ENCODE measurements at regions of chr15 and their contacts with region 1.

Region 1: DNA sequence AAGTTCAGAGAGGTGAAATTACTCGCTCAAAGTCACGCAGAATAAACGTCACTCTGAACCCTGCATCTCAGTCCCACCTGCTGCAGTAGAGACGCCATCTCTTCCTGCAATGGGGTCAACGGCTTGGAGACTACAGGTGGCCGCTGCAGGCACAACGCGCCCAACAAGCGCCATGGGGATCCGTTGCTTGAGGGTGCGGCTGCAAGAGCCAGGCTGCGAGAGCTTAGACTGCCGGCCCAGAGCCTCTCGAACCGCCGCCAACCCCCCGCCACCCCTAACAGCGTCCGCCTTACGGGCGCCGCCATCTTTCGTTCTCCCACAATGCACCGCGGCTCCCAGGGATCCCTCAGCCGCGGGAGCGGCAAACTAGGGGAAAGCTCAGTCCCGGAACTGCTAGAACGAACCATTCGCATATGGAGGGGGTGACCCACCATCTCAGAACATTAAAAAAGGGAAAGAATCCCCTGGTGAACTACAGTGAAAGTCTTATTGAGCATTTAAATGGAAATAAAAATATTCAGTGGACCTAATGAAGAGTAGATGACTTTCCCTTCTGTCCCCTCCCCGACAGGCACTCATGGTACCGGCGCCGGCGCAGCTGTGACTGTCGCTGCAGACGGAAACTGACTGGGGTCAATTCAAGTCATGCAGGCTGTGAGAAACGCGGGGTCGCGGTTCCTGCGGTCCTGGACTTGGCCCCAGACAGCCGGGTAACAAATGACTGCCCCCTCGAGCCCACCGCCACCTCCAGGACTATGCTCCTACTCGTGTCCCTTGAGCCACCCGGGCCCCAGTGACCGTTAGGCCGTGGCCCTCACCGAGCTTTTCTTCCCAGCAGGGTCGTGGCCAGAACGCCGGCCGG is at the starts of genes MRPL46 and MRPS11:
- DNase-seq: peak; percentile 92
- H3K4me3 ChIP-seq: peak within 1 kb of the TSS; percentile 76 to 99 (median 84)
- H3K27ac ChIP-seq: peak within 1 kb of the TSS; percentile 96
- H3K4me1 ChIP-seq: peaks cover 37% of the 10 kb centered on the region
- H3K27me3 ChIP-seq: no peaks in the 10 kb centered on the region
- CTCF ChIP-seq: no peak
- POLR2A ChIP-seq: peak; percentile 87
- total RNA-seq, gene MRPL46: 27.9 and 30.9 TPM in 2 replicates
- total RNA-seq, gene MRPS11: 66.3 and 71.7 TPM in 2 replicates

Region 2: GRCh38 chr15:88401996-88402656 is 65.2 kb before region 1 on chr15:
- CTCF ChIA-PET with region 1: no interaction called
- POLR2A ChIA-PET with region 1: no interaction called
- dilution Hi-C with region 1: no loop called
- intact Hi-C with region 1: no loop called
- DNase-seq: no peak
- H3K4me3 ChIP-seq: no peak overlapping the region
- H3K27ac ChIP-seq: no peak overlapping the region
- H3K4me1 ChIP-seq: no peaks in the 10 kb centered on the region
- H3K27me3 ChIP-seq: no peaks in the 10 kb centered on the region
- CTCF ChIP-seq: no peak
- POLR2A ChIP-seq: no peak

Region 3: GRCh38 chr15:88454867-88455810 is 12.2 kb before region 1 on chr15:
- CTCF ChIA-PET with region 1: interaction called, 26 read pairs
- POLR2A ChIA-PET with region 1: no interaction called
- dilution Hi-C with region 1: no loop called
- intact Hi-C with region 1: loop called (anchors 1 kb)
- DNase-seq: peak; percentile 60
- H3K4me3 ChIP-seq: no peak overlapping the region
- H3K27ac ChIP-seq: no peak overlapping the region
- H3K4me1 ChIP-seq: peaks cover 15% of the 10 kb centered on the region
- H3K27me3 ChIP-seq: no peaks in the 10 kb centered on the region
- CTCF ChIP-seq: peak; percentile 77 to 84
- POLR2A ChIP-seq: no peak

Region 4: GRCh38 chr15:88546248-88547129 is 79.2 kb after region 1 on chr15 and contains the start of gene DET1:
- CTCF ChIA-PET with region 1: no interaction called
- POLR2A ChIA-PET with region 1: interaction called, 3 read pairs
- dilution Hi-C with region 1: no loop called
- intact Hi-C with region 1: loop called (anchors 1 kb)
- DNase-seq: peak; percentile 95
- H3K4me3 ChIP-seq: peak within 1 kb of the TSS; percentile 44 to 87 (median 74)
- H3K27ac ChIP-seq: peak within 1 kb of the TSS; percentile 27
- H3K4me1 ChIP-seq: no peaks in the 10 kb centered on the region
- H3K27me3 ChIP-seq: no peaks in the 10 kb centered on the region
- CTCF ChIP-seq: peak; percentile 82 to 87
- POLR2A ChIP-seq: peak; percentile 47
- total RNA-seq, gene DET1: 5.1 and 5.2 TPM in 2 replicates

Region 5: GRCh38 chr15:88638626-88639372 is 171.5 kb after region 1 on chr15 and contains the start of gene ISG20:
- CTCF ChIA-PET with region 1: no interaction called
- POLR2A ChIA-PET with region 1: interaction called, 5 read pairs
- dilution Hi-C with region 1: no loop called
- intact Hi-C with region 1: loop called (anchors 1 kb)
- DNase-seq: peak; percentile 99
- H3K4me3 ChIP-seq: peak within 1 kb of the TSS in 1 of 3 experiments; percentile 24
- H3K27ac ChIP-seq: peak within 1 kb of the TSS; percentile 86
- H3K4me1 ChIP-seq: peaks cover 21% of the 10 kb centered on the region
- H3K27me3 ChIP-seq: no peaks in the 10 kb centered on the region
- CTCF ChIP-seq: peak; percentile 30 to 54
- POLR2A ChIP-seq: peak; percentile 75
- total RNA-seq, gene ISG20: 5.4 and 6.4 TPM in 2 replicates

Region 6: DNA sequence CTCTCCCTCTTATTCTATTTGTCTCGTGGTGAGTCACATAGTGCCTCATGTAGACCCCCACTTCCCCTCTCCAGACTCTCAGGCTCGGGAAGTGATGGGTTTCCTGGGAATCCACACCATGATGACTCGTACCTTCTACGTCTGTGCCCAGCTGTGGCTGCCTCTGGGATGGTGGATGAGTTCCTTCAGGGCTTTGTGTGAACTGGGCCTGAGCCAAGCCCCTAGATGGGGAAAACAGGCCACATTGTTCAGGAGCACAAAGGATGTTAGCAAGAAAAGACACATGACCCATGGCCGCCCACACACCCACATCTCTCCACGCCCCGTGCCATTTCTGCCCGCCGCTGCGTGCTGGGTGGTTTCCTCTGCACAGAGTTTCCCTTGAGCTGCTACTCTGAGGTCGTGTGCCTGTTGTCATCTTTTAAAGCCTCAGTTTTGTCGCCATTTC is 182.0 kb after region 1 on chr15:
- CTCF ChIA-PET with region 1: no interaction called
- POLR2A ChIA-PET with region 1: no interaction called
- dilution Hi-C with region 1: no loop called
- intact Hi-C with region 1: loop called (anchors 2 kb)
- DNase-seq: peak; percentile 95
- H3K4me3 ChIP-seq: no peak overlapping the region
- H3K27ac ChIP-seq: peak overlapping the region; percentile 99
- H3K4me1 ChIP-seq: peaks cover 35% of the 10 kb centered on the region
- H3K27me3 ChIP-seq: no peaks in the 10 kb centered on the region
- CTCF ChIP-seq: no peak
- POLR2A ChIP-seq: no peak

Measured in endothelial cell of umbilical vein (primary cell).